Posterior cingulate gyrus (tissue), 11 donors: ENCODE measurements at regions of chr7 and their contacts with region 1.

Region 1: GRCh38 chr7:24819916-24820689 is 62.8 kb upstream of the GSDME start:
- DNase-seq: peak; percentile 49 to 95 (median 80)

Region 2: DNA sequence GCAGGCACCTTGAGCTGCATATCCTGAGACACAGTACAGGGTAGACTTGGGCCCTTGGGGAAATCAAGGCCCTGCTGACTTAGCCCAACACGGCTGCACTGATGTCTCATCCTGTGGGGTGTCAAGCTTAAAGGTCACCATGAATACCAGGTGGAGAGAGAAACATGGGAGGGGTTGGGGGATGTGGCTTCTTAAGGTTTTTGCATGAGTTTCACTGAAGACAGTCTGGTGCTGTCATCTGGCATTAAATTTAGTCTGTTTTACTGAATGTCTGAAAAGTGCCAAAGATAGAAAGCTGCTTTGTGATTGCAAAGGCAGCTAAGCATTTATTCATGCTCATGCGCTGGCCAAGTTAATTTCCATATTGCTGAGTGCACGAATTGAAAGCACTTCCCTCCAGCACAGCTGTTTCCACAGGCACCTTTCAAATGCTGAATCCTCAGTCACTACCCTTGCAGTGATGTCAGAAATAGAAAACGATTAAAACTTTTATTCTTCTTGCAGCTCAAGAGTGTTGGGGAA is 57.7 kb after region 1 on chr7:
- intact Hi-C with region 1: no loop called
- DNase-seq: peak in 4 of 10 donors; percentile 23 to 40 (median 36)

Region 3: GRCh38 chr7:24979863-24980533 is 159.9 kb after region 1 on chr7 and contains the start of gene OSBPL3:
- intact Hi-C with region 1: loop called (anchors 2 kb)
- DNase-seq: peak; percentile 93 to 99 (median 96)

Region 4: GRCh38 chr7:25069900-25070443 is 249.9 kb after region 1 on chr7:
- intact Hi-C with region 1: loop called (anchors 1 kb)
- DNase-seq: peak in 6 of 10 donors; percentile 8 to 80 (median 28)